Activated CD4-positive, alpha-beta T cell treated with anti-CD3 and anti-CD28 coated beads for 36 hours (primary cell): ENCODE measurements at regions of chr19 and their contacts with region 1.

Region 1: GRCh38 chr19:45187421-45188100 is 9.0 kb downstream of the BLOC1S3 start:
- DNase-seq: peak; percentile 38
- ATAC-seq: peak; percentile 83
- H3K4me3 Mint-ChIP-seq: no peak overlapping the region
- H3K27ac Mint-ChIP-seq: no peak overlapping the region
- H3K4me1 Mint-ChIP-seq: peaks cover 5% of the 10 kb centered on the region
- H3K27me3 Mint-ChIP-seq: no peaks in the 10 kb centered on the region

Region 2: GRCh38 chr19:44703336-44704078 is 484.1 kb before region 1 on chr19:
- CTCF ChIA-PET with region 1: no interaction called
- POLR2A ChIA-PET with region 1: no interaction called
- intact Hi-C with region 1: no loop called
- DNase-seq: no peak
- ATAC-seq: no peak
- H3K4me3 Mint-ChIP-seq: no peak overlapping the region
- H3K27ac Mint-ChIP-seq: no peak overlapping the region
- H3K4me1 Mint-ChIP-seq: no peaks in the 10 kb centered on the region
- H3K27me3 Mint-ChIP-seq: no peaks in the 10 kb centered on the region

Region 3: GRCh38 chr19:44988896-44989556 is 198.5 kb before region 1 on chr19:
- CTCF ChIA-PET with region 1: interaction called, 3 read pairs
- POLR2A ChIA-PET with region 1: no interaction called
- intact Hi-C with region 1: loop called in 1 of 2 experiments (anchors 5 kb)
- DNase-seq: peak; percentile 82
- ATAC-seq: peak; percentile 89
- H3K4me3 Mint-ChIP-seq: no peak overlapping the region
- H3K27ac Mint-ChIP-seq: no peak overlapping the region
- H3K4me1 Mint-ChIP-seq: no peaks in the 10 kb centered on the region
- H3K27me3 Mint-ChIP-seq: no peaks in the 10 kb centered on the region

Region 4: DNA sequence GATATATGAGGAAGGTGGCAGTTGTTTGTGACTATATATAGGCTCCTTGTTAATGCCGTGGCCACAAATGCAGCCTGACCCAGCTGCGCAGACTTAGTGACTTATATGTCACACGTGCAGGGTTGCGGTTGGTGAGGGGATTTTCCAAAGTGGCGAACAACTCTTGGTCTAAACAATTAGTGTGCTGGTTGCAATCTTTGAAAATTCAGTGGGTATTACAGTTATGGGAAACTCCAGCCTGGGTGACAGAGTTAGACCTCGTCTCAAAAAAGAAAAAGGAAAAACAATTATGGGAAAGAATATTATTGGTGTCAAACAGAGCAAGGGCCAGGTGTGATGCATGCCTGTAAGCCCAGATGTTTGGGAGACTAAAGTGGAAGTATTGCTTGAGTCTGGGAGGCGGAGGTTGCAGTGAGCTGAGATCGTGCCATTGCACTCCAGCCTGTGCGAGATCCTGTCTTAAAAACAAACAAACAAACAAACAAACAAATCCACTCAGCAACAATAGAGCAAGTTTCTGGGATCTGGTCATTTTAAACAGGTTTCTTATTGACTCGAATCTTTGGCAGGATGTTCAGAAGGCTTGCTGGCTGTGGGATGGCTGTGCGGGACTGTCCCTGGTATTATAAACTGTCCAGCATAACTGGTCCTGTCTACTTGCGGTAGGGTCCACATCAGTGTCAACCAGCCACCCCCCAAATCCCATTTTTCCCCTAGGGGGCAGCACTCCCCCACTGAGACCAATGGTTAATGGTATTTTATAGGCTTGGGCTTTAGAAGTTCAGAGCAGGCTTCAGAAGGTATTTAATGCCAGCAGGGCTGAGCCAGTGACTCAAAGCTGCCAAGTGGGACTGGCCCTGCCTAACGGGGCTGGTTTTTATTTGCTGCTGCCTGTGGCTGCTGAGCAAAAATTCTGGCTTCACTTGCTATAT is 170.9 kb before region 1 on chr19:
- CTCF ChIA-PET with region 1: interaction called, 3 read pairs
- POLR2A ChIA-PET with region 1: no interaction called
- intact Hi-C with region 1: loop called in 1 of 2 experiments (anchors 2 kb)
- DNase-seq: peak; percentile 83
- ATAC-seq: peak; percentile 79
- H3K4me3 Mint-ChIP-seq: peak overlapping the region; percentile 40
- H3K27ac Mint-ChIP-seq: peak overlapping the region; percentile 83
- H3K4me1 Mint-ChIP-seq: peaks cover 9% of the 10 kb centered on the region
- H3K27me3 Mint-ChIP-seq: no peaks in the 10 kb centered on the region

Region 5: DNA sequence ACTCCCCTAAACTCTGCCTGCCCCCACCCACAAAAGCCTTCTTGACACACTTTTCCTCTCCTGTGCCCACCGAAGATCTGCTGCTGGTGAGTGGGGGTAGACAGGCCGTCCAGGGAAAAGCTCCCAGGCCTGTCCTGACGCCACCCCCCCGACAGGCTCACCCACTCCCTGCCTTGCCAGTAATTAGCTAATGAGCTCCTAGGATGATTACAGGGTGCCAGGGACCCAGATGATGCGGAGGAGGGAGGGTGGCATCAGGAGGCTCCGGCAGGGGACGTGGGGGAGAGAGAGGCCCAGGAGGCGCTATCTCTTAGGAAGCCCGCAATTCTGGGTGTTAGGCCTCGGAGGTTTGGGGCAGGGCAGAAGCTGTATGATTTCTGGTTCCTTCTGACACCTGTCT is 90.5 kb after region 1 on chr19:
- CTCF ChIA-PET with region 1: no interaction called
- POLR2A ChIA-PET with region 1: no interaction called
- intact Hi-C with region 1: no loop called
- DNase-seq: no peak
- ATAC-seq: no peak
- H3K4me3 Mint-ChIP-seq: no peak overlapping the region
- H3K27ac Mint-ChIP-seq: no peak overlapping the region
- H3K4me1 Mint-ChIP-seq: no peaks in the 10 kb centered on the region
- H3K27me3 Mint-ChIP-seq: no peaks in the 10 kb centered on the region